Sigmoid colon (tissue), 7 donors: ENCODE measurements at regions of chr2 and their contacts with region 1.

Region 1: GRCh38 chr2:1817256-1818051 is 73.1 kb upstream of the PXDN start:
- DNase-seq: peak; percentile 98
- H3K4me3 ChIP-seq: peak overlapping the region in 1 of 4 donors; percentile 12
- H3K27ac ChIP-seq: peak overlapping the region; percentile 81 to 96 (median 94)
- H3K4me1 ChIP-seq: peaks cover 0 to 31% (median 28%) of the 10 kb centered on the region in 4 donors
- H3K27me3 ChIP-seq: no peaks in the 10 kb centered on the region
- CTCF ChIP-seq: peak; percentile 83 to 96 (median 93)
- EP300 ChIP-seq: peak; percentile 78 to 95 (median 87)
- POLR2A ChIP-seq: no peak

Region 2: DNA sequence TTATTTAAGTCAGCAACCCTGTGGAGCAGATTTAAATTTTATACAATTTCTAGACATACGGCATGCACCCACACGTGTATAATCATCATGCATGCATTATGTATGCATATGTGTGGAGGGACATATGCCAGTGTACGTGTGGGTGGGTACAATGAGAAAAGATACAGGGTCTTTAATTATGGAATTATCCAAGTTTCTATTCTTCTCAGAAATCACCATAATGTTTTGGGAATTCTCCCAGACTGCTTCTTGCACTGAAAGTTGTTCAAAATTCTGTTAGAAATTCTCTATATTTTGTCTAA is 1076.3 kb before region 1 on chr2:
- intact Hi-C with region 1: loop called (anchors 5 kb)
- DNase-seq: no peak
- H3K4me3 ChIP-seq: peak overlapping the region in 3 of 4 donors; percentile 38 to 55 (median 51)
- H3K27ac ChIP-seq: peak overlapping the region; percentile 54 to 78 (median 68)
- H3K4me1 ChIP-seq: peaks cover 0 to 24% (median 12%) of the 10 kb centered on the region in 4 donors
- H3K27me3 ChIP-seq: no peaks in the 10 kb centered on the region
- CTCF ChIP-seq: no peak
- EP300 ChIP-seq: no peak
- POLR2A ChIP-seq: no peak

Region 3: GRCh38 chr2:1584691-1585485 is 232.6 kb before region 1 on chr2:
- intact Hi-C with region 1: no loop called
- DNase-seq: no peak
- H3K4me3 ChIP-seq: no peak overlapping the region
- H3K27ac ChIP-seq: no peak overlapping the region
- H3K4me1 ChIP-seq: no peaks in the 10 kb centered on the region
- H3K27me3 ChIP-seq: no peaks in the 10 kb centered on the region
- CTCF ChIP-seq: no peak
- EP300 ChIP-seq: no peak
- POLR2A ChIP-seq: no peak

Region 4: GRCh38 chr2:1653956-1654695 is 163.3 kb before region 1 on chr2:
- intact Hi-C with region 1: loop called (anchors 2 kb)
- DNase-seq: no peak
- H3K4me3 ChIP-seq: no peak overlapping the region
- H3K27ac ChIP-seq: peak overlapping the region; percentile 80 to 90 (median 86)
- H3K4me1 ChIP-seq: peaks cover 0 to 60% (median 50%) of the 10 kb centered on the region in 4 donors
- H3K27me3 ChIP-seq: no peaks in the 10 kb centered on the region
- CTCF ChIP-seq: no peak
- EP300 ChIP-seq: no peak
- POLR2A ChIP-seq: no peak

Region 5: DNA sequence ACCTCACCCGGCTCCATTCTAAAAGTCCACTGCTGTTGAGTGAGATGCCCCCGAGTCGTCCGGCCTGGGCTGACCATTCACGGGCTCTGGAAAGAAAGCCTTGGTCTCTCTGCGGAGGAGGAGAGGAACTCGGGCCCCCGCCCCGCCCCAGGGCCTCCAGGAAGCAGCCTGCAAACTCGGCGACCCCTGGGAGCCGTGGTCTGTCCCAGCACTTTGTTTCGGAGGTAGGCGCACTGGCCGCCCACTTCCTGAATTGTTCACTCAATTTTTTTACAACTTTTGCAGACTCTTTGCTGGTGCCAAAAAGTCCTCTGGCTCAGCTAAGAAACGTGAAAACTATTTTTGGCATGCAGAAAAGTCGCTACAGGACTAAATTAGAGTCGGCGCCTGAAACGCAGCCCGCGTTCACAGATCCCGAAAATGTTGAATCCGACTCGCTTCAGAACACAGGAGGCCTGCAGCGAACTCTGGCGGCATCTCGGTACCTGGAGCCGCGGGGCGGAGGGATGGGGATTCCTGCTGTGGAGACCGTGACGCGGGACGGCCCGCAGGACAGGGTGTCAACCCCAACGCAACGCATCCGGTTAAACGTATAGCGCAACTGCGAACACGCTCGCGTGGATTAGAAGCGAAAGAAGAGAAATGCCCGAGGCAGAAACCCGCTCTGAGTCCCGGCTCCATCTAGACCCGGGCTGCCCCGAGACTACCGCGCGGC is 74.6 kb before region 1 on chr2:
- intact Hi-C with region 1: loop called (anchors 1 kb)
- DNase-seq: peak; percentile 96
- H3K4me3 ChIP-seq: peak overlapping the region; percentile 62 to 87 (median 76)
- H3K27ac ChIP-seq: peak overlapping the region; percentile 96 to 100 (median 99)
- H3K4me1 ChIP-seq: peaks cover 0 to 66% (median 52%) of the 10 kb centered on the region in 4 donors
- H3K27me3 ChIP-seq: no peaks in the 10 kb centered on the region
- CTCF ChIP-seq: peak in 2 of 4 experiments; percentile 19 to 48
- EP300 ChIP-seq: no peak
- POLR2A ChIP-seq: peak in 1 of 2 donors; percentile 40